ENCODE measurements at regions of chr5 and their contacts with region 1.

Region 1: DNA sequence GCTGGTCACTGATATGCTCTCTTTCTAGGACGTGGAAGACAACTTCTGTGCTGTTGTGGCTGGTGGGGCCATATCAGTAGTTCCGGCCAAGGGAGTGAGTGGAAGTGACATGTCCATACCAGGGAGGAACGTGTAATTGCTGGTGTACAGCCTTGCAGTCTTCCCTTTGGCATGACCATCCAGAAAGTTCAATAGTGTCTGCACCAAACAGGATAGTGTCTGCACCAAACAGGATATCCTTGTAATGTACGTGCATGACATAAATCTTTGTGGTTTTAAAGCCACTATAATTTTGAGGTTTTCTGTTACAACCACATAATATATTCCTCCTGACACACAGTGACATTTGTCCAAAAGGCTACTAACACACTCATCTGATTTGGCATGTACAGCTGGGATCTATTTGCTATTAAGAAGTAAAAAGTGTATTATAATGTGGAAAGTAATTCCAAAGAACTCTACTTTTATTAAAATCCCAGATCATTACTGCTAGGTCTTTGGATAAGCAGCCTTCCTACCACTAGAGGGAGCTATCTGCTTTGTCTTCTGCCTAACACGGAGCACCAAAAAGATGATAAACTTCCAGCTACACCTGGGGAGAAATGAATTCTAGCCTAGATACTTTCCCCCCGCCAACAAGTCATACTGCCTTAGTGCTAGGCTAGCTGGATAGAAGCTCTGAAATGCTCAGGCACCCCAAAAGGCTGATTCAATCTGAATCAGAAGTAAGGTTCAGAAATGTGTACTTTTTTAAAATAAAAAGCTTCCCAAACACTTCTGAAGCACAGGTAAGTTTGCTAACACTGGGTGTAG is 52.7 kb downstream of the RNF145 start:
- DNase-seq: peak in 6 of 9 experiments; percentile 38 to 84 (median 47)
- ATAC-seq: peak; percentile 78
- H3K4me3 ChIP-seq: no peak overlapping the region
- H3K4me3 Mint-ChIP-seq: no peak overlapping the region
- H3K27ac ChIP-seq: peak overlapping the region in 1 of 2 experiments; percentile 38
- H3K27ac Mint-ChIP-seq: peak overlapping the region; percentile 89
- H3K4me1 ChIP-seq: peaks cover 11% of the 10 kb centered on the region
- H3K4me1 Mint-ChIP-seq: peaks cover 19% of the 10 kb centered on the region
- H3K27me3 ChIP-seq: no peaks in the 10 kb centered on the region
- H3K27me3 Mint-ChIP-seq: no peaks in the 10 kb centered on the region
- CTCF ChIP-seq: peak; percentile 86

Region 2: GRCh38 chr5:159184858-159185381 is 28.3 kb after region 1 on chr5:
- CTCF ChIA-PET with region 1: interaction called, 13 read pairs
- POLR2A ChIA-PET with region 1: no interaction called
- intact Hi-C with region 1: loop called in 1 of 2 experiments (anchors 2 kb)
- DNase-seq: peak in 1 of 9 experiments; percentile 20
- ATAC-seq: no peak
- H3K4me3 ChIP-seq: no peak overlapping the region
- H3K4me3 Mint-ChIP-seq: no peak overlapping the region
- H3K27ac ChIP-seq: no peak overlapping the region
- H3K27ac Mint-ChIP-seq: peak overlapping the region; percentile 61
- H3K4me1 ChIP-seq: peaks cover 14% of the 10 kb centered on the region
- H3K4me1 Mint-ChIP-seq: peaks cover 56% of the 10 kb centered on the region
- H3K27me3 ChIP-seq: no peaks in the 10 kb centered on the region
- H3K27me3 Mint-ChIP-seq: no peaks in the 10 kb centered on the region
- CTCF ChIP-seq: no peak

Region 3: DNA sequence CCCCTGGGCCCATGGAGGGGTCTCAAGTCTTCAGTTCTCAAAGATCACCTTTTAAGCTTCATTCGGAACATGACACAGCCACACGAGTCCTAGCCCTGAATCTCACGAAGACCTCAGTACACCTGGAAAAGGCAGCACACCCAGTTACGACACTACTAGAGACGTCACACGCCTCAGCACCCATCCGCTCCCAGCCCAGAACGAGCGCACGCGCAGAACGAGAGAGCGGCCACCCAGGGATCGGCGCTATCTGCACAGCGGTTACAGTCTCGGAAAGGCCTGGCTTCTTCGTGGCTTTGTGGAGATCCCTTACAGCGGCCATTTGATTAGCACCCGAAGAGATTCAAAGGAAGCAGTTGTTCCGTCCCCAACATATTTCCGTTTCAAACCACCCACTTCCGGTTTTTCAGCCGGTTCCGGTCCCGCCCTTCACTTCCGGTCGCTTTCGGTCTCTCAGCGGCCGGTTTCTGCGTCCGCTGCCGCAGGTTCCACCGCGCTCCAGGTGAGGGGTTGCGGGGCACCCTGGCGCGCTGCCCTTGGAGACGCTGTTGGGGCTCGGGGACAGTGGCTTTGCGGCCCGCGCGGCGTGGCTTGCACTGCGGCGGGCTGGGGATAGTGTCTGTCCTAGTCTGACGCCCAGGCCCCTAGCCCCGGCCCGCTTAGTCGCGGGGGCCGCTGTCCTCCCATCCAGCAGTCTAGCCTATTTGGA is 106.4 kb after region 1 on chr5 and contains the start of gene UBLCP1:
- CTCF ChIA-PET with region 1: interaction called, 6 read pairs
- POLR2A ChIA-PET with region 1: interaction called, 6 read pairs
- intact Hi-C with region 1: loop called (anchors 2 to 5 kb)
- DNase-seq: peak; percentile 57 to 92 (median 80)
- ATAC-seq: peak; percentile 86
- H3K4me3 ChIP-seq: peak within 1 kb of the TSS; percentile 89 to 96
- H3K4me3 Mint-ChIP-seq: peak within 1 kb of the TSS; percentile 92
- H3K27ac ChIP-seq: peak within 1 kb of the TSS; percentile 97 to 99
- H3K27ac Mint-ChIP-seq: peak within 1 kb of the TSS; percentile 99
- H3K4me1 ChIP-seq: peaks cover 21% of the 10 kb centered on the region
- H3K4me1 Mint-ChIP-seq: peaks cover 55% of the 10 kb centered on the region
- H3K27me3 ChIP-seq: no peaks in the 10 kb centered on the region
- H3K27me3 Mint-ChIP-seq: no peaks in the 10 kb centered on the region
- CTCF ChIP-seq: no peak
- total RNA-seq, gene UBLCP1: 16.4 to 19.6 TPM

Region 4: GRCh38 chr5:159286420-159287035 is 129.9 kb after region 1 on chr5:
- CTCF ChIA-PET with region 1: interaction called, 11 read pairs
- POLR2A ChIA-PET with region 1: interaction called, 3 read pairs
- intact Hi-C with region 1: no loop called
- DNase-seq: peak in 3 of 9 experiments; percentile 13 to 58 (median 44)
- ATAC-seq: no peak
- H3K4me3 ChIP-seq: no peak overlapping the region
- H3K4me3 Mint-ChIP-seq: no peak overlapping the region
- H3K27ac ChIP-seq: no peak overlapping the region
- H3K27ac Mint-ChIP-seq: no peak overlapping the region
- H3K4me1 ChIP-seq: no peaks in the 10 kb centered on the region
- H3K4me1 Mint-ChIP-seq: no peaks in the 10 kb centered on the region
- H3K27me3 ChIP-seq: no peaks in the 10 kb centered on the region
- H3K27me3 Mint-ChIP-seq: no peaks in the 10 kb centered on the region
- CTCF ChIP-seq: peak; percentile 53

Region 5: GRCh38 chr5:159316519-159317383 is 160.1 kb after region 1 on chr5:
- CTCF ChIA-PET with region 1: interaction called, 142 read pairs
- POLR2A ChIA-PET with region 1: interaction called, 7 read pairs
- intact Hi-C with region 1: loop called (anchors 1 kb)
- DNase-seq: peak in 7 of 9 experiments; percentile 27 to 70 (median 44)
- ATAC-seq: peak; percentile 73
- H3K4me3 ChIP-seq: no peak overlapping the region
- H3K4me3 Mint-ChIP-seq: no peak overlapping the region
- H3K27ac ChIP-seq: no peak overlapping the region
- H3K27ac Mint-ChIP-seq: no peak overlapping the region
- H3K4me1 ChIP-seq: no peaks in the 10 kb centered on the region
- H3K4me1 Mint-ChIP-seq: no peaks in the 10 kb centered on the region
- H3K27me3 ChIP-seq: no peaks in the 10 kb centered on the region
- H3K27me3 Mint-ChIP-seq: peaks cover 7% of the 10 kb centered on the region
- CTCF ChIP-seq: peak; percentile 55

Region 6: DNA sequence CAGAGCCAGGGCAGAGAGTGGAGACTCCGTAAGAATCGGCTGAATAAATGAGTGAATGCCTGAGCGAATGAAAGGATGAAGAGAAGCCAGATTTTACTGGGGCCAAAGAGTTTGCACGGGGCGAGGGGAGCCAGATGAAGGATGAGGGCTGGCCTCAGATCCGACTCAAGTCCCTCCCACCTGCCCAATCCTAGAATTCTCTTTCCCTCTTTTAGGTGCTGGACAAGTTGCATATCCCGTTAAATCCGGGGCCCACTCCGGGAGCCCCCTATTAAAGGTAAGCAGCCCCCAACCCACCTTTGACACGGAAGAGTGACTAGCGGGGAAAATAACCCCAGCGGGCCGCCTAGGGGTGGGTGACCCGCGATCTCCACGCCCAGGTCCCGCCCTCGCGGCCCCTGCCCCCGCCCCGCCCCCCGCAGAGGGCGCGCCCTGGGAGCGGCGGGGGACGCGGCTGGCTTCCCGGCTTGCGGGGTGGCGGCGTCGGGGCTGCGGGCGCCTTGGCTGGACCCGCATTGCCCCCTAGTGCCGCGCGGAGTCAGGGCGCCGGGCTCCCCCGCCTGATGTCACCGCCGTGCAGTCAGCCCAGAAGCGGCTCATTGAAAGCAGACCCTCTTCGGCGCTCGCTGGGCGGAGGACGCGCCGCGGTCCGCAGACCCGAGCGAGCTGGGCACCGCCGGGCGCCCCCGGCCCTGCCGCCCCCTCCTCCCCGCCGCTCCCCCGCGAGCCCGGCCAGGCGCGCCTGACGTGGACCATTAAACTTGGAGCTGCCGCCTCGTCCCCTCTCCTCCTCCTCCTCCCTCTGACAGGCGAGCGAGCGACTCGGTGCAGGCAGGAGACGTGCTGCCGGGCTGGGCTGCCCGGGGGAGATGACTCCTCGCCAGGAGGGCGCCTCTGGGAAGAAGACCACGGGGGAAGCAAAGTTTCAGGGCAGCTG is 759.5 kb after region 1 on chr5 and contains the start of gene ADRA1B:
- CTCF ChIA-PET with region 1: interaction called, 3 read pairs
- POLR2A ChIA-PET with region 1: no interaction called
- intact Hi-C with region 1: loop called in 1 of 2 experiments (anchors 2 kb)
- DNase-seq: peak in 8 of 9 experiments; percentile 14 to 59 (median 35)
- ATAC-seq: peak; percentile 69
- H3K4me3 ChIP-seq: no peak within 1 kb of the TSS
- H3K4me3 Mint-ChIP-seq: peak within 1 kb of the TSS; percentile 51
- H3K27ac ChIP-seq: no peak within 1 kb of the TSS
- H3K27ac Mint-ChIP-seq: no peak within 1 kb of the TSS
- H3K4me1 ChIP-seq: peaks cover 5% of the 10 kb centered on the region
- H3K4me1 Mint-ChIP-seq: peaks cover 14% of the 10 kb centered on the region
- H3K27me3 ChIP-seq: peaks cover 7 to 20% of the 10 kb centered on the region in 2 experiments
- H3K27me3 Mint-ChIP-seq: peaks cover 59% of the 10 kb centered on the region
- CTCF ChIP-seq: no peak
- total RNA-seq, gene ADRA1B: not detected

Region 7: DNA sequence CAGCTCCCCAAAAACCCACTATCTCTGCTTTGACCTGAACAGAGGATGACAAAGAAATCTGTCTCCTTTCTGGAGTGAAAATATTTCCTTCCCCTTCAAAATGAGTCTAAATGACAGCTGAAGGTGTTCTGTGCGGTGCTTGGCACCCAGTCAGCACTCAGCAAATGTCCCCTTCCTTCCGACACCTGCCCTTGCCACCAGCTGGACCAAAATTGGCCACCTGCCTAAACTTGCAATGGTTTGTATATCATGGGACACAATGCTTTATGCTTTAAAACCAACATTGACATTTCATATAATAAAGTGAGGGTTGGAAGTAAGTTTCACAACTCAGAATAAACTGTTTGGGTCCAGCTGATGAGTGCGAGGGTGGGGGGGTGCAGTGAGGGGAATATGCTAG is 844.8 kb after region 1 on chr5:
- CTCF ChIA-PET with region 1: no interaction called
- POLR2A ChIA-PET with region 1: no interaction called
- intact Hi-C with region 1: loop called in 1 of 2 experiments (anchors 5 kb)
- DNase-seq: no peak
- ATAC-seq: no peak
- H3K4me3 ChIP-seq: no peak overlapping the region
- H3K4me3 Mint-ChIP-seq: no peak overlapping the region
- H3K27ac ChIP-seq: no peak overlapping the region
- H3K27ac Mint-ChIP-seq: no peak overlapping the region
- H3K4me1 ChIP-seq: no peaks in the 10 kb centered on the region
- H3K4me1 Mint-ChIP-seq: no peaks in the 10 kb centered on the region
- H3K27me3 ChIP-seq: peaks cover 0 to 2% of the 10 kb centered on the region in 2 experiments
- H3K27me3 Mint-ChIP-seq: peaks cover 34% of the 10 kb centered on the region
- CTCF ChIP-seq: no peak